Activated B cell treated with CpG ODN at 0.5 μM for 24 hours (primary cell): ENCODE measurements at regions of chr14 and their contacts with region 1.

Region 1: GRCh38 chr14:59126710-59127432 is 61.6 kb upstream of the DAAM1 start:
- DNase-seq: no peak
- ATAC-seq: peak; percentile 95
- H3K4me3 Mint-ChIP-seq: no peak overlapping the region
- H3K27ac Mint-ChIP-seq: no peak overlapping the region
- H3K4me1 Mint-ChIP-seq: no peaks in the 10 kb centered on the region
- H3K27me3 Mint-ChIP-seq: peaks cover 3% of the 10 kb centered on the region
- CTCF ChIP-seq: peak; percentile 68

Region 2: DNA sequence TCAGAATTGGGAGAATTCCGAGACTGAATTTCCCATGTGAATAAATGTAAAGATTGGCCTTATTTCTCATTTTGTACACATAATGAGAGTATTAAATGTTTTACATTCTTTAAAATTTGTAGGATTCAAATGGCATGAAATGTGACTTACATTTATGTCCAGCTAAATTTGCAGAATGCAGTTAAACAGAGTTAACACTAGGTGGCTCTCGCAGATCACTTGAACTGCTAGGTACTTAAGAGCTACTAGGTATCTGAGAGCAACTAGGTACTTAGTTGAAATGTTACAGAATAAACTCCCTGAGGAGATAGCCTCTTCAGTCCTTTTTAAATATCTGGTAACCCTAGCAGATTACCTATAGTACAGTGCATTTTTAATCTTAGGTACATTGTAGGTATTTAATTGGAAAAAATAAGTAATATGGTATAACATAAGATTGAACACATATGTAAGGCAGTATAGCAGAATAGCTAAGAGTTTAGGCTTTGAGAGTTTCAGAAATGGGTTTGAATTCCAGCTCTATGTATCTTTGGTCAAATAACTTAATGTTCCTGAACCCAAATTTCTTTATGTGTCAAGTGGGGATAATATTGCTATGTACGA is 625.6 kb before region 1 on chr14:
- CTCF ChIA-PET with region 1: interaction called, 17 read pairs
- POLR2A ChIA-PET with region 1: no interaction called
- intact Hi-C with region 1: loop called (anchors 1 kb)
- DNase-seq: no peak
- ATAC-seq: peak; percentile 71
- H3K4me3 Mint-ChIP-seq: no peak overlapping the region
- H3K27ac Mint-ChIP-seq: no peak overlapping the region
- H3K4me1 Mint-ChIP-seq: no peaks in the 10 kb centered on the region
- H3K27me3 Mint-ChIP-seq: no peaks in the 10 kb centered on the region
- CTCF ChIP-seq: no peak

Region 3: DNA sequence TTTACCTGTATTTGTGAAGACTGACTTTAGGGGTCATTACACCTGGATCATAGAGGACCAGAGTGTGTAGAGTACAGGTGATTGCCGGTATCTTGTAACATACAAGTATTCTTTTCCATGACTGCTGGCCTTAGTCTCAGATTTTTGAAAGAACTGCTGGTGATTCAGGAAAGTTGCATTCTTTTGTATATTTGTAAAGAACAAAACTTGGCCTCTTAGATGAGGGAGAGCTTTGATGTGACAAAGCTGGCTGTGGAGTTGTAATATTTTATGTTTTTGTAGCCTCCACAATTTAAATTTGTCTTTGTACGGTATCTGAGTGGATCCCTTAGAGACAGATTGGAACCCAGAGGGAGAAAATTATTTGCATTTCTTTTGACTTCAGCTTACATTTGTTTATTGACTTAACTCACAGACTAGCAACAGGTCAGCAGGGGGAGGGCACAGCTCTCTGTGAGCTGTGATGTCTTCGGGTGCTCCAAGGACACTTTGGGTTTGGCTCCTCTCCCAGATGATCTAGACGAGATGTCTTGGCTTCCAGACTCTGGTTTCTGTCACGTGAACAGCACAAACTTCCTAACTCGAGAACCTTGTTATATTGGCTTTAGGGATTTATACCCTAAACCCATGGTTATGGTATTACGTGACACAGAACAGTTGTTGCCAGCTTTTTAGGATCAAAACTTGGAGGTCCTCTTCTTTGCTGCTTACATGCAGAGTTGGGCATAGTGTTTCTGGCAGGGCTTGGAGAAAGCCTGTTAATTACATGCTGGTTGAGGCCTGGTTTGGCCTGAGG is 127.5 kb after region 1 on chr14:
- CTCF ChIA-PET with region 1: no interaction called
- POLR2A ChIA-PET with region 1: no interaction called
- intact Hi-C with region 1: loop called (anchors 5 kb)
- DNase-seq: no peak
- ATAC-seq: no peak
- H3K4me3 Mint-ChIP-seq: no peak overlapping the region
- H3K27ac Mint-ChIP-seq: no peak overlapping the region
- H3K4me1 Mint-ChIP-seq: peaks cover 34% of the 10 kb centered on the region
- H3K27me3 Mint-ChIP-seq: no peaks in the 10 kb centered on the region
- CTCF ChIP-seq: no peak

Region 4: GRCh38 chr14:59438195-59438647 is 311.4 kb after region 1 on chr14:
- CTCF ChIA-PET with region 1: interaction called, 98 read pairs
- POLR2A ChIA-PET with region 1: no interaction called
- intact Hi-C with region 1: no loop called
- DNase-seq: no peak
- ATAC-seq: no peak
- H3K4me3 Mint-ChIP-seq: no peak overlapping the region
- H3K27ac Mint-ChIP-seq: no peak overlapping the region
- H3K4me1 Mint-ChIP-seq: no peaks in the 10 kb centered on the region
- H3K27me3 Mint-ChIP-seq: no peaks in the 10 kb centered on the region
- CTCF ChIP-seq: no peak

Region 5: DNA sequence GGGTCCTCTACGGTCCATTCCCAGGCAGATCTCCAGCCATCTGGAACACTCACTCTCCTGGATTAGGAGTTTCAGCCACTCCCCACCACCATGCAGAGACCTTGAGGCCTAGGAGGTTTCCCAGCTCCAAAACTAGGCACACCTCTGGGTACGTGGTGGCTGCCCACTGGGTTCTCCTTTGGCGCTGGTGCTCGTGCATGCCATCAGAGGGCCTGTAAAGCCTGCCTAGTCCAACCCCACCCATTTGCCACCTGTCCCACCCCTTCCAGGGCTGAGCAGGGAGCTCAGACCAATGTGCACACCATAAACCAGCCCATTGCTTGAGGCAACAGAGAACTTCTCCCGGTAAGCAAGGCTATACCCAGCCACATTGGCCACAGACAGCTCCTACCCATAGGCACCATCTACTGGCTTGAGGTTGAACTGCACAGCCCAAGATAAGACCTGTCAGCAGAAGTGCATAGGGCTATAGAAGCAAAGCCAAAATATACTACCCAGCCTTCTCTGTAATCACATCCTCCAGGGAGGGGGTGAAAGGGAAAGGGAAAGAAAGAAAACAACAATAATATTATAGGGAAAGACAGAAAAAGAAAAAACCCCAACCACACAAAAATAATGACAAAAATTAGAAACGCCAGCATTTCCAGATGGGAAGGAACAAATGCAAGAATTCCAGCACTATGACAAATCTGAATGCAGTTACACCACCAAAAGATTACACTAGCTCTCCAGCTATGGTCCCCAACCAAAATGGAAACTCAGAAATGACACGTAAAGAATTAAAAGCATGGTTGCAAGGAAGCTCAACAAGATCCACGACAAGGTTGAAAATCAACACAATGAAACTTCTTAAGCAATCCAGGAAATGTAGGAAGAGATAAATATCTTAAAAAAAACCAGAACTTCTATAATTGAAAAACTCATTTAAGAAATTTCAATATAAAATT is 561.6 kb after region 1 on chr14:
- CTCF ChIA-PET with region 1: no interaction called
- POLR2A ChIA-PET with region 1: no interaction called
- intact Hi-C with region 1: loop called (anchors 5 kb)
- DNase-seq: no peak
- ATAC-seq: no peak
- H3K4me3 Mint-ChIP-seq: no peak overlapping the region
- H3K27ac Mint-ChIP-seq: no peak overlapping the region
- H3K4me1 Mint-ChIP-seq: no peaks in the 10 kb centered on the region
- H3K27me3 Mint-ChIP-seq: peaks cover 13% of the 10 kb centered on the region
- CTCF ChIP-seq: no peak